Naive thymus-derived CD4-positive, alpha-beta T cell (primary cell): ENCODE measurements at regions of chr12 and their contacts with region 1.

Region 1: DNA sequence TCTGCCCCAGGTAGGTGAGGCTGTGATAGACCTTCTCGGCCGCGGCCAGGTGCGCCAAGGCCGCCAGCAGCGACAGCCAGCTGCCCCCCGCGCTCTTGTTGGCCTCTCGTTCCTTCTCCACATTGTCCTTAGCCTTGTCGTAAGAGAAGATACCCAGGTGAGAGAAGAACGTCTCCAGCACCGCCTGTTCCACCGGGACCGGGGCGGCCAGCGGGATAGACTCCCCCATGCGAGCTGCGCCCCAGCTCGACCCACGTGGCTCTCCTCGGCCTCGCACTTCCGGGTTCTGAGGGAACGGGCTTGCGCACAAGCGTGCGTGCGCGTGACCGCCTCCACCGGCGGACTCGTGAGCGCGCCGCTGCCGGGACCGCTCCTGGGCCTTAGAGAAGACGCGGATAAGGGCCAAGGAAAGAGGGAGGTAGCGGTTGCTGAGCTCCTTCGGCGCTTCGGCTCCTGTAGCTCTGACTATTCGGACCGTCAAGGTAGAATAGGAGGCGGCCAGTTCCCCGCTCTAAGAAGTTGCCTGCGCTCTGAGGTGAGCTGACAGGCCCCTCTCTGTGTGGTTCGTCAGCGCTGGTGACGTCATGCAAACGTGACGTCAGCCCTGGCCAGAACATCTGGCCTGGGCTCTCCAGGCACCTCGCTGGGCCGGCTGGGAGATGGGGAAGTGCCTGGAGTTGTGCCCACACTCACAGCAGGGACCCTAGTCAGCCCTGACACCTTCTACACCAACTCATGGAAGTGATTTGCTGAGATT is at the start of gene KICS2:
- DNase-seq: peak; percentile 89 to 95 (median 93)
- ATAC-seq: peak; percentile 96
- H3K4me3 ChIP-seq: peak within 1 kb of the TSS; percentile 87
- H3K4me3 Mint-ChIP-seq: peak within 1 kb of the TSS; percentile 86 to 100 (median 98)
- H3K27ac ChIP-seq: peak within 1 kb of the TSS; percentile 92
- H3K27ac Mint-ChIP-seq: peak within 1 kb of the TSS; percentile 94 to 100 (median 98)
- H3K4me1 ChIP-seq: peaks cover 8 to 19% of the 10 kb centered on the region in 2 donors
- H3K4me1 Mint-ChIP-seq: peaks cover 17 to 51% (median 41%) of the 10 kb centered on the region in 7 donors
- H3K27me3 ChIP-seq: no peaks in the 10 kb centered on the region
- H3K27me3 Mint-ChIP-seq: peaks cover 0 to 21% (median 8%) of the 10 kb centered on the region in 5 donors
- total RNA-seq, gene KICS2: 11.7 to 26.9 (median 19.5) TPM

Region 2: DNA sequence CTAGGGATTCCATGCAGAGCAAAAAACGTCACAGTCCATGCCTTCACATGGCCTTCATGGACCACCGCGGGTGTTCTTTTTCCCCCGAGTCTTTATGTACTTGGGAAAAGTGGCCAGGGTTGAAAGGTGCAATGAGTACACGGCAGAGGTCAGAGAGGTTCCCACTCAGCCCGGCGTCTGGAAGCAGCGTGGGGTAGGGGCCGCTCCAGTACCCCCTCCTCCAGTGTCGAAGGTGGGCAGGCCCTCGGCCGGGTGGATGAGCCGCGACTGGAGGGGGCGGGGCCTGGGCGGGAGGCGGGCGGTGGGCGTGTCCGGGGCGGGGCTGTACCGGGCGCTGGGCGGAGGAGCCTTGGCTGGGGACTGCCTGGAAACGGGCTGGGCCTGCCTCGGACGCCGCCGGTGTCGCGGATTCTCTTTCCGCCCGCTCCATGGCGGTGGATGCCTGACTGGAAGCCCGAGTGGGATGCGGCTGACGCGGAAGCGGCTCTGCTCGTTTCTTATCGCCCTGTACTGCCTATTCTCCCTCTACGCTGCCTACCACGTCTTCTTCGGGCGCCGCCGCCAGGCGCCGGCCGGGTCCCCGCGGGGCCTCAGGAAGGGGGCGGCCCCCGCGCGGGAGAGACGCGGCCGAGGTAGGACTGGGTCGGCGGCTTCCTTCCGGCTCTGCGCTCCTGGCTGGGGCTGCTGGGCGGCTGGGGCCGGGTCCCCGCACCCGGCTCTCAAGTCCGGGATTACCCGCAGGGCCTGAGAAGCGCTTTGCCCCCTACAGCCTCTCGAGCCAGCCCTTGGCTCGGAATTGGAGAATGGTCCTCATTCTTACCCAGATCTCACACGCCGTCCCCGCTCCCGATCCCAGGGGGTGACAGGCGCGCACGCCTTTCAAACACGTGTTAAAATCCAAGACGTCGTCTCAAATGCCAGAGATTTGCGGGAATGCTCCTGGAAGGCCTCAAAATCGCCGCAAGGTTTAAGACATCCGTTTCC is 442.4 kb before region 1 on chr12 and contains the start of gene RXYLT1:
- CTCF ChIA-PET with region 1: no interaction called
- POLR2A ChIA-PET with region 1: interaction called, 6 read pairs
- intact Hi-C with region 1: loop called (anchors 1 kb)
- DNase-seq: peak; percentile 68 to 85 (median 77)
- ATAC-seq: peak; percentile 98
- H3K4me3 ChIP-seq: peak within 1 kb of the TSS; percentile 72
- H3K4me3 Mint-ChIP-seq: peak within 1 kb of the TSS; percentile 91 to 99 (median 96)
- H3K27ac ChIP-seq: peak within 1 kb of the TSS; percentile 88
- H3K27ac Mint-ChIP-seq: peak within 1 kb of the TSS; percentile 89 to 98 (median 94)
- H3K4me1 ChIP-seq: peaks cover 3 to 13% of the 10 kb centered on the region in 2 donors
- H3K4me1 Mint-ChIP-seq: peaks cover 6 to 48% (median 25%) of the 10 kb centered on the region in 7 donors
- H3K27me3 ChIP-seq: no peaks in the 10 kb centered on the region
- H3K27me3 Mint-ChIP-seq: peaks cover 0 to 3% (median 0%) of the 10 kb centered on the region in 5 donors
- total RNA-seq, gene RXYLT1: 9.9 to 22.0 (median 15.4) TPM

Region 3: DNA sequence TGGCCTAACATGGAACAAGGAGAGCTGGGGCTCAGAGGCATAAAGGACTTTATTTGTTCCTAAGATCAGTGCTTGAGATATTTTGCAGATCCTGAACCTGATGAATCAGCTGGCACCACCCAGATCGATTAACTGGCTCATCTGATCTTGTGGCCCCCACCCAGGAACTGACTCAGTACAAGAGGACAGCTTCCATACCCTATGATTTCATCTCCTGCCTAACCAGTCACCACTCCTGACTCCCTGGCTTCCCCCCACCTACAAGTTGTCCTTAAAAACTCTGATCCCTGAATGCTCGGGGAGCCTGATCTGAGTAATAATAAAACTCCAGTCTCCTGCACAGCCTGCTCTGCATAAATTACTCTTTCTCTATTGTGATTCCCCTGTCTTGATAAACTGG is 163.3 kb after region 1 on chr12:
- CTCF ChIA-PET with region 1: no interaction called
- POLR2A ChIA-PET with region 1: no interaction called
- intact Hi-C with region 1: loop called in 1 of 2 experiments (anchors 5 kb)
- DNase-seq: peak in 1 of 9 donors; percentile 58
- ATAC-seq: peak; percentile 9
- H3K4me3 ChIP-seq: no peak overlapping the region
- H3K4me3 Mint-ChIP-seq: peak overlapping the region; percentile 35 to 86 (median 63)
- H3K27ac ChIP-seq: peak overlapping the region; percentile 52
- H3K27ac Mint-ChIP-seq: peak overlapping the region; percentile 81 to 93 (median 87)
- H3K4me1 ChIP-seq: peaks cover 5 to 25% of the 10 kb centered on the region in 2 donors
- H3K4me1 Mint-ChIP-seq: peaks cover 24 to 55% (median 47%) of the 10 kb centered on the region in 7 donors
- H3K27me3 ChIP-seq: no peaks in the 10 kb centered on the region
- H3K27me3 Mint-ChIP-seq: peaks cover 0 to 5% (median 0%) of the 10 kb centered on the region in 5 donors

Region 4: DNA sequence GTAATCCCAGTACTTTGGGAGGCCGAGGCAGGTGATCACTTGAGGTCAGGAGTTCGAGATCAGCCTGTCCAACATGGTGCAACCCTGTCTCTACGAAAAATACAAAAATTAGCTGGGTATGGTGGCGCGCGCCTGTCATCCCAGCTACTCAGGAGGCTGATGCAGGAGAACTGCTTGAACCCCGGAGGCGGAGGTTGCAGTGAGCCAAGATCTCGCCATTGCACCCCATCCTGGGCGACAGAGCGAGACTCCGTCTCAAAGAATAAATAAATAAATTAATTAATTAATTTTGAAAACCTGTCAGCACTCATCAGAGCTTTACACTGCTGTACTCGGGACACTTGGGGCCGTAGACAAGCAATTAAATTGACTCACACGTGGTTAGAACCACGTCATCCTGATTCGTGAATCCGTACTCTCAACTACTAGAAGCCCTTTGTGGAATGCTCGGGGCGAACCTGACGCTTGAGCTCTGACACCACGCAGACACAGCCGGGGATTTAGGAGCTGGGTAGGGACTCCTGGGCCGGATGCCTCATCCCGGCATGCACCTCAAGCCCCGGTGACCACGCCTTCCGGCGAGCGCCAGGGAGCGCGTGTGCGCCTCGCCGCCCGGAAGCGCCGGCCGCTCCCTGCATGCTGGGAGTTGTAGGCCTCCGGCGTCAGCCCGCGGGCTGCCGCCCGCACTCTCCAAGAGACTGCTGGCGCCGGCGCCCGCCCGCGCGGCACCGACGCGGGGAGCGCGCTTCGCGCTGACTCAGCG is 181.7 kb after region 1 on chr12 and contains the start of gene XPOT:
- CTCF ChIA-PET with region 1: no interaction called
- POLR2A ChIA-PET with region 1: interaction called, 6 read pairs
- intact Hi-C with region 1: loop called (anchors 1 kb)
- DNase-seq: peak; percentile 85 to 94 (median 92)
- ATAC-seq: peak; percentile 97
- H3K4me3 ChIP-seq: peak within 1 kb of the TSS; percentile 81
- H3K4me3 Mint-ChIP-seq: peak within 1 kb of the TSS; percentile 90 to 99 (median 96)
- H3K27ac ChIP-seq: peak within 1 kb of the TSS; percentile 82
- H3K27ac Mint-ChIP-seq: peak within 1 kb of the TSS; percentile 84 to 98 (median 95)
- H3K4me1 ChIP-seq: peaks cover 0 to 8% of the 10 kb centered on the region in 2 donors
- H3K4me1 Mint-ChIP-seq: peaks cover 8 to 41% (median 25%) of the 10 kb centered on the region in 7 donors
- H3K27me3 ChIP-seq: no peaks in the 10 kb centered on the region
- H3K27me3 Mint-ChIP-seq: no peaks in the 10 kb centered on the region
- total RNA-seq, gene XPOT: 46.6 to 118 (median 75.1) TPM

Region 5: GRCh38 chr12:64759035-64759901 is 537.1 kb after region 1 on chr12 and contains the start of gene GNS:
- CTCF ChIA-PET with region 1: no interaction called
- POLR2A ChIA-PET with region 1: no interaction called
- intact Hi-C with region 1: loop called in 1 of 2 experiments (anchors 1 kb)
- DNase-seq: peak; percentile 81 to 99 (median 86)
- ATAC-seq: peak; percentile 96
- H3K4me3 ChIP-seq: peak within 1 kb of the TSS; percentile 98
- H3K4me3 Mint-ChIP-seq: peak within 1 kb of the TSS; percentile 86 to 99 (median 96)
- H3K27ac ChIP-seq: peak within 1 kb of the TSS; percentile 77
- H3K27ac Mint-ChIP-seq: peak within 1 kb of the TSS; percentile 78 to 96 (median 91)
- H3K4me1 ChIP-seq: peaks cover 0 to 21% of the 10 kb centered on the region in 2 donors
- H3K4me1 Mint-ChIP-seq: peaks cover 17 to 60% (median 48%) of the 10 kb centered on the region in 7 donors
- H3K27me3 ChIP-seq: no peaks in the 10 kb centered on the region
- H3K27me3 Mint-ChIP-seq: peaks cover 0 to 4% (median 0%) of the 10 kb centered on the region in 5 donors
- total RNA-seq, gene GNS: 24.4 to 62.8 (median 35.2) TPM